ENCODE measurements at regions of chr5 and their contacts with region 1.

Region 1: DNA sequence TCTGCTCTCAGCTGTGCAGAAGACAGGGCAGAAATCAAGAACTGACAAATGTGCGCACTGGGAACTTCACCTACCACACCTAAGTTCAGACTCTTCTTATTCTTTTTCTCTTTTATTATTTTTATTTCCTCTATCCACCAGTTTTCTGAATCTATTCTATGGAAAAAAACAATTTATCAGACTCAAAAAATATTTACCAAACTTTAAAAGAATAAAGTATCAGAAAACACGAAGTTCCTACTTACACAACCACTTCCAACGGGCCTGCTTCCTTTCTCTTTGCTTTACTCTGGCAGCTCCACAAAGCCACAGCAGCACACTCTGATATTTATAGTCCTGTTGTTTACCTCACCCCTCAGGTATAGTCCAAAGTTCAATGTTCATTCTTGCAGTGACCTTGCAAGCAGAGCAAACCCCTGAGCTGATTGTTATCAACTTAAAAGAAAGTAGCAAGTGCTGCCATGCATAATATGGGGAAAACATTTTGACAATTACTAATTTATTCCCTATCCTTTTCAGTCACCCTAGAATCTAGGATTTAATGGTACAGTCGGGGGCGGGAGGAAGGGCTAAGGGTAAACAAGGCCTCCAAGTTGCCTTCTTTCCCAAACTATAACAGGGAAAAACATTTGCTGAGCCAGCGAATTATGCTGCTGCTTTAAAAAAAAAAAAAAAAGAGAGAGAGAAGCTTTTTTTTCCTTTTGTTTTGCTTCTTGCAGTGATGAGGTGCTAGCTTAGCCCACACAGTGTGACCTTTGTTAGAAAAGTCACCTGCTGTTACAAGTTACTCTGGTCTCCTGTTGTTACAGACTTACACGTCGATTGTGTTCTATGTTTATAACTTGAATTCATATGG is at the start of gene SELENOP:
- DNase-seq: peak in 3 of 10 donors; percentile 26 to 74 (median 62)
- H3K4me3 ChIP-seq: peak within 1 kb of the TSS; percentile 41 to 81 (median 65)
- H3K27ac ChIP-seq: peak within 1 kb of the TSS; percentile 40 to 99 (median 94)
- H3K27me3 ChIP-seq: no peaks in the 10 kb centered on the region
- CTCF ChIP-seq: peak in 5 of 56 donors; percentile 3 to 19 (median 9)
- total RNA-seq, gene SELENOP: 61.5 to 884 (median 225) TPM

Region 2: DNA sequence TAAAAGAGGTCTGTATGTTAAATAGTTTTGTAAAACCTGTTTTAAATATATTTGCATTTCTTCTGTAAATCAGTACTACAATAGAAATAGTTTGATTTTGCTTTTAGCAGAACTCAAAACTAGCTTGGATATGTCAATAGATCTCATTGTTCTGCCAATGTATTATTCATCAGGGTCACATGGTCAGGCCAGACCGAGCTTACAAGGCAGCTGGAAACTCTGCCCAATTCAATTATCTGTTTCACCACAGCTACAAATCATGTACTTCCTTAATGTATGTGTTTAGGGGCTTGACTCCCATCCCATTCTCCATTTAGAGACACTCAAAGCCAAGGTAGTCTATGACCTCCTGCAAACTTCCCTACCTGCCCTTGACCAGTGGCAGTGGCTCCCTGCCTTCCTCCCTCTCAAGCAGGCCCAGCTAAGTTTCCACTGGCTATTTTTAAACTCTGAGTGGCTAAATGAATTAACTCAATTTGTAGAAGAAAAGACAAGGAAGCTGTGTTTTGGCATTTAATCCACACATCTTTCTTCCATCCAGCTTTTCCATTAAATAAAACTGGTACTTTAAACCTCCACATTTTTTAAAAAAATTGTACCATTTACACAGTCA is 46.3 kb after region 1 on chr5:
- intact Hi-C with region 1: loop called (anchors 2 to 5 kb)
- DNase-seq: peak in 3 of 10 donors; percentile 41 to 72 (median 56)
- H3K4me3 ChIP-seq: peak overlapping the region in 47 of 59 donors; percentile 4 to 61 (median 27)
- H3K27ac ChIP-seq: peak overlapping the region; percentile 44 to 99 (median 96)
- H3K27me3 ChIP-seq: peaks cover 0 to 2% (median 0%) of the 10 kb centered on the region in 45 donors
- CTCF ChIP-seq: peak in 3 of 56 donors; percentile 6 to 19 (median 17)

Region 3: GRCh38 chr5:42876375-42876844 is 64.6 kb after region 1 on chr5:
- intact Hi-C with region 1: loop called in 1 of 2 experiments (anchors 5 kb)
- DNase-seq: no peak
- H3K4me3 ChIP-seq: peak overlapping the region in 53 of 59 donors; percentile 1 to 59 (median 36)
- H3K27ac ChIP-seq: peak overlapping the region in 48 of 59 donors; percentile 0 to 78 (median 46)
- H3K27me3 ChIP-seq: no peaks in the 10 kb centered on the region
- CTCF ChIP-seq: no peak

Region 4: GRCh38 chr5:42904926-42905325 is 93.1 kb after region 1 on chr5:
- intact Hi-C with region 1: no loop called
- DNase-seq: no peak
- H3K4me3 ChIP-seq: no peak overlapping the region
- H3K27ac ChIP-seq: no peak overlapping the region
- H3K27me3 ChIP-seq: no peaks in the 10 kb centered on the region
- CTCF ChIP-seq: no peak

Measured in dorsolateral prefrontal cortex (tissue), 120 donors.